Lower leg skin (tissue), 4 donors: ENCODE measurements at regions of chr1 and their contacts with region 1.

Region 1: GRCh38 chr1:151534665-151535278 is 5.3 kb upstream of the TUFT1 start:
- DNase-seq: peak; percentile 76 to 96
- H3K4me3 ChIP-seq: no peak overlapping the region
- CTCF ChIP-seq: peak in 1 of 3 donors; percentile 26
- POLR2A ChIP-seq: no peak

Region 2: DNA sequence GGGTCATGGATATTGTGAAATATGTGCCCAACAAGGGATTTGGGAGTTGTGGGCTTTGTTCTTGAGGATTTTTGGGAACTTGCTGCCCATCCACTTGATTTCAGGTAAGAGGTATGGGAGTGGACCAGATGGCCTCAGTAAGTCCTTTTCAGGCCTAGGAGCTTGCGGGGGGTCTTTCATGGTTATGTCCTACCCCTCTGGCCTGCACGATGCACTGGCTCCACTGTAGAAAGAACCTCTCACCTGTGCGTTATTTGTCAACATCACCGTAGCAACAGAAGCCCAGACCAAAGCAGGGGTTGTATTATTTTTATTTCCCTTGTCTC is 195.2 kb after region 1 on chr1:
- intact Hi-C with region 1: loop called (anchors 5 kb)
- DNase-seq: peak in 1 of 2 donors; percentile 43
- H3K4me3 ChIP-seq: no peak overlapping the region
- CTCF ChIP-seq: no peak
- POLR2A ChIP-seq: no peak